ENCODE measurements at regions of chr2 and their contacts with region 1.

Region 1: GRCh38 chr2:31170071-31170698 is 31.9 kb upstream of the GALNT14 start:
- DNase-seq: peak; percentile 87
- H3K4me3 ChIP-seq: no peak overlapping the region; a peak in 1 of 4 replicates
- H3K27ac ChIP-seq: no peak overlapping the region
- H3K4me1 ChIP-seq: peaks cover 0 to 11% of the 10 kb centered on the region in 2 experiments; a peak in 1 of 4 replicates
- H3K27me3 ChIP-seq: no peaks in the 10 kb centered on the region
- CTCF ChIP-seq: peak; percentile 97
- EP300 ChIP-seq: no peak
- RAD21 ChIP-seq: peak; percentile 100

Region 2: GRCh38 chr2:30730736-30731647 is 439.2 kb before region 1 on chr2:
- CTCF ChIA-PET with region 1: interaction called, 14 read pairs
- POLR2A ChIA-PET with region 1: no interaction called
- DNase-seq: no peak
- H3K4me3 ChIP-seq: no peak overlapping the region
- H3K27ac ChIP-seq: no peak overlapping the region
- H3K4me1 ChIP-seq: peaks cover 0 to 14% of the 10 kb centered on the region in 2 experiments; a peak in 2 of 4 replicates
- H3K27me3 ChIP-seq: peaks cover 10% of the 10 kb centered on the region
- CTCF ChIP-seq: no peak
- EP300 ChIP-seq: no peak
- RAD21 ChIP-seq: no peak

Region 3: DNA sequence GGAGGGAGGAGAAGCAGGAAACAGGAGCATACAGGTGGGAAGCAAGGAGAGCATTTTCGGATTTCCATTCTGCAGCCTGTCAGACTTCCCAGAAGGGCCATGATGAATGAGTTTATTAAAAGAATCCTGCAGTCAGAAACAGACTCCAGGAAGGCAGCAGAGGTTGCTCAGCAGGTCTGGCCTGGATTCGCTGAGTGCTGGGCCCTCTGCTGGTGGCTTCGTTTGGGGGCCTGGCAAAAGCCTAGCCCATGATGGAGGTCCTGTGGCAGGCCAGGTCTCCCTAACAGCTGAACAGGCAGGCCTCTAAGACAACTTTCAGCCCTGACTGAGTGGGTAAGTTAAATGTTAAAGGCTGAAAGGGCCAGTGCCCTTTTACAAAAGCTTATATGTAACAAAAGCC is 254.7 kb before region 1 on chr2:
- CTCF ChIA-PET with region 1: interaction called, 24 read pairs
- POLR2A ChIA-PET with region 1: no interaction called
- DNase-seq: peak; percentile 77
- H3K4me3 ChIP-seq: no peak overlapping the region
- H3K27ac ChIP-seq: peak overlapping the region in 1 of 2 experiments; percentile 71; a peak in 2 of 4 replicates
- H3K4me1 ChIP-seq: peaks cover 0 to 11% of the 10 kb centered on the region in 2 experiments; a peak in 1 of 4 replicates
- H3K27me3 ChIP-seq: no peaks in the 10 kb centered on the region
- CTCF ChIP-seq: peak; percentile 22; the same call in 1 of the 2 replicates
- EP300 ChIP-seq: 0 out of 4 replicates have a peak, but pooled peaks of 1 of the 2 experiments have one; percentile 21
- RAD21 ChIP-seq: peak; percentile 71

Region 4: DNA sequence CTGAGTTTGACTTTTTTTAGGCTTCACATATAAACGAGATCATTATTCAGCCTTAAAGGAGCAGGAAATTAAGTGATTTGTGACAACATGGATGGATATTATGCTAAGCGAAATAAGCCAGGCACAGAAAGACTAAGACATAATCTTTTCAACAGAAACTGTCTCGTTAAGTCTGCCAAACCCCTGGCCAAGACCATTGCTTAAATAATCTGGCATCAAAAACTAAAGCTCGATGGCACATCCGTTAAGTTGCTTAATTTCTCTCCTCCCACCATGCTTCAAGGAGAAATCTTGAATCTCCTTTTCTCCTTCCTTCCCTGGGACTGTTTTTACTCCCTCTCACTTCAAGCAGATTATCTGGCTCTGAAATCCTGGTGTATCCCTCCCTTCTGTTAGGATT is 172.2 kb before region 1 on chr2:
- CTCF ChIA-PET with region 1: interaction called, 18 read pairs
- POLR2A ChIA-PET with region 1: no interaction called
- DNase-seq: no peak
- H3K4me3 ChIP-seq: no peak overlapping the region
- H3K27ac ChIP-seq: peak overlapping the region in 1 of 2 experiments; percentile 48; a peak in 1 of 4 replicates
- H3K4me1 ChIP-seq: peaks cover 0 to 43% of the 10 kb centered on the region in 2 experiments; a peak in 2 of 4 replicates
- H3K27me3 ChIP-seq: no peaks in the 10 kb centered on the region
- CTCF ChIP-seq: no peak
- EP300 ChIP-seq: no peak
- RAD21 ChIP-seq: no peak

Region 5: GRCh38 chr2:31125918-31126695 is 44.1 kb before region 1 on chr2:
- CTCF ChIA-PET with region 1: interaction called, 16 read pairs
- POLR2A ChIA-PET with region 1: no interaction called
- DNase-seq: no peak
- H3K4me3 ChIP-seq: no peak overlapping the region
- H3K27ac ChIP-seq: no peak overlapping the region
- H3K4me1 ChIP-seq: peaks cover 0 to 17% of the 10 kb centered on the region in 2 experiments; a peak in 2 of 4 replicates
- H3K27me3 ChIP-seq: peaks cover 6% of the 10 kb centered on the region; the same call in 1 of the 2 replicates
- CTCF ChIP-seq: no peak
- EP300 ChIP-seq: no peak
- RAD21 ChIP-seq: no peak

Region 6: GRCh38 chr2:31227711-31228125 is 57.5 kb after region 1 on chr2:
- CTCF ChIA-PET with region 1: interaction called, 21 read pairs
- POLR2A ChIA-PET with region 1: interaction called, 3 read pairs
- DNase-seq: no peak
- H3K4me3 ChIP-seq: no peak overlapping the region
- H3K27ac ChIP-seq: no peak overlapping the region
- H3K4me1 ChIP-seq: no peaks in the 10 kb centered on the region
- H3K27me3 ChIP-seq: peaks cover 11% of the 10 kb centered on the region; the same call in 1 of the 2 replicates
- CTCF ChIP-seq: no peak
- EP300 ChIP-seq: no peak
- RAD21 ChIP-seq: no peak

Region 7: GRCh38 chr2:31287654-31288053 is 117.5 kb after region 1 on chr2:
- CTCF ChIA-PET with region 1: no interaction called
- POLR2A ChIA-PET with region 1: no interaction called
- DNase-seq: no peak
- H3K4me3 ChIP-seq: no peak overlapping the region
- H3K27ac ChIP-seq: peak overlapping the region; percentile 56 to 59; a peak in 3 of 4 replicates
- H3K4me1 ChIP-seq: peaks cover 2 to 26% of the 10 kb centered on the region in 2 experiments; a peak in 3 of 4 replicates
- H3K27me3 ChIP-seq: no peaks in the 10 kb centered on the region
- CTCF ChIP-seq: no peak
- EP300 ChIP-seq: peak in 1 of 2 experiments; percentile 79; a peak in 1 of 4 replicates
- RAD21 ChIP-seq: no peak

Measured in SK-N-SH (cell line).